ENCODE measurements at regions of chr17 and their contacts with region 1.

Region 1: GRCh38 chr17:65988081-65988850 is 203.7 kb downstream of the CEP112 start:
- DNase-seq: peak; percentile 54
- H3K4me3 ChIP-seq: no peak overlapping the region
- H3K27ac ChIP-seq: no peak overlapping the region
- H3K4me1 ChIP-seq: no peaks in the 10 kb centered on the region
- H3K27me3 ChIP-seq: no peaks in the 10 kb centered on the region
- CTCF ChIP-seq: peak; percentile 30 to 60
- POLR2A ChIP-seq: no peak

Region 2: DNA sequence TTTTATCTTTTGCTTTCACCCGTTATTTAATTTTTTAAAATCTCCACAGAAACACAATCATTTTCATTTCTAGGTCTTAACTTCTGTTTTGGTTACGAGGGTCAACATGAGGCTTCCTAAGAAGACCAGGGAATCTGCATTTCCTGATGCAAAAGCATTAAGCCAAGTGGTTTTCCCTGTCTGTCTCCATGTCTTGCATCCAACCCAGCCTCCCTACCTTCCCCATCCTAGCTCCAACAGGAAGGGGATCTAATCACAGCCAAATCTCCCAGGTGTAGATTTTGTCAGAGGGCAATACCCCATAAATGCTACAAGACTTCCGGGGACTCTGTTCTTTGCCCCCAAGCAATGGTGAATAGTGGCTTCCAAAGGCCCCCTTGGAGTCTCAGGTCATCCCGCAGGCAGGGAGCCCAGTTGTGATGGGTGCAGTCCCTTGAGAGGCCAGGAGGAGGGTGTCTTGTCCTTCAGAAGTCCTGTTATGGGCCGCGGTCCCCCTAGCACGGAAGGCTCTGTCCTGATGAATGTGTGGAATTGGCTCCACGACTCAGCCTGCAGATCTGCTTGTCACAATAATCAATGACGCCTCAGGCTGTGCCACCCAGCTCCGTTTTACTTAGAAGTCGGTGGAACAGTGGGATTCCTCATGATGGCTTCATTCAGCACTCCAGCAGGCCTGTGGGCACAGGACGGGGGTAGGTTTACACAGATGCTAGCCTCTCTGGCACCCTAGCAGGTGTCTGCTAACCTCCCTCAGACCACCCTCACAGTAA is 710.0 kb before region 1 on chr17:
- CTCF ChIA-PET with region 1: interaction called, 7 read pairs
- POLR2A ChIA-PET with region 1: no interaction called
- dilution Hi-C with region 1: no loop called
- intact Hi-C with region 1: loop called (anchors 1 kb)
- DNase-seq: peak; percentile 58
- H3K4me3 ChIP-seq: no peak overlapping the region
- H3K27ac ChIP-seq: no peak overlapping the region
- H3K4me1 ChIP-seq: peaks cover 1% of the 10 kb centered on the region
- H3K27me3 ChIP-seq: no peaks in the 10 kb centered on the region
- CTCF ChIP-seq: peak; percentile 79 to 80
- POLR2A ChIP-seq: no peak

Region 3: DNA sequence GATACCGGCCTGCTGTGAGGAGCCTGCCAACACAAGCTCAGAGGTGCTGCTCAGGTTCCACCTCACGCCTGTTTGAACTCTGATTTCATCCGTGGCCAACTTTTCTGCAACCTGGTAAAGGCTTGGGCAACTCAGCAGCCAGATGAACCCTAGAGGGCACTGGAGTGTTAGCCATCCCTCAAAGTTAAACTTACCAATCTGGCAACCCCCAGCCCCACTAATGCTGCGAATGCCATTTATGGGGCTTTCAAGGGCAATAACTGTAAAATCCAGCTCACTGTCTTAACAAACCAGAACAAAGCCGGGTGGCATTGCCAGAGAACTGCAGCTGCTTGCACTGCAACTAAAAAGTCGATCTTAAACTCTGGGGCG is 532.3 kb before region 1 on chr17:
- CTCF ChIA-PET with region 1: no interaction called
- POLR2A ChIA-PET with region 1: no interaction called
- dilution Hi-C with region 1: no loop called
- intact Hi-C with region 1: loop called (anchors 10 kb)
- DNase-seq: peak; percentile 20
- H3K4me3 ChIP-seq: no peak overlapping the region
- H3K27ac ChIP-seq: no peak overlapping the region
- H3K4me1 ChIP-seq: no peaks in the 10 kb centered on the region
- H3K27me3 ChIP-seq: peaks cover 10 to 16% of the 10 kb centered on the region in 2 experiments
- CTCF ChIP-seq: peak in 1 of 2 donors; percentile 29
- POLR2A ChIP-seq: no peak

Region 4: GRCh38 chr17:65556014-65556909 is 432.0 kb before region 1 on chr17:
- CTCF ChIA-PET with region 1: no interaction called
- POLR2A ChIA-PET with region 1: no interaction called
- dilution Hi-C with region 1: no loop called
- intact Hi-C with region 1: loop called (anchors 2 kb)
- DNase-seq: peak; percentile 21
- H3K4me3 ChIP-seq: no peak overlapping the region
- H3K27ac ChIP-seq: no peak overlapping the region
- H3K4me1 ChIP-seq: peaks cover 5% of the 10 kb centered on the region
- H3K27me3 ChIP-seq: peaks cover 4 to 5% of the 10 kb centered on the region in 2 experiments
- CTCF ChIP-seq: peak; percentile 76 to 79
- POLR2A ChIP-seq: no peak

Region 5: DNA sequence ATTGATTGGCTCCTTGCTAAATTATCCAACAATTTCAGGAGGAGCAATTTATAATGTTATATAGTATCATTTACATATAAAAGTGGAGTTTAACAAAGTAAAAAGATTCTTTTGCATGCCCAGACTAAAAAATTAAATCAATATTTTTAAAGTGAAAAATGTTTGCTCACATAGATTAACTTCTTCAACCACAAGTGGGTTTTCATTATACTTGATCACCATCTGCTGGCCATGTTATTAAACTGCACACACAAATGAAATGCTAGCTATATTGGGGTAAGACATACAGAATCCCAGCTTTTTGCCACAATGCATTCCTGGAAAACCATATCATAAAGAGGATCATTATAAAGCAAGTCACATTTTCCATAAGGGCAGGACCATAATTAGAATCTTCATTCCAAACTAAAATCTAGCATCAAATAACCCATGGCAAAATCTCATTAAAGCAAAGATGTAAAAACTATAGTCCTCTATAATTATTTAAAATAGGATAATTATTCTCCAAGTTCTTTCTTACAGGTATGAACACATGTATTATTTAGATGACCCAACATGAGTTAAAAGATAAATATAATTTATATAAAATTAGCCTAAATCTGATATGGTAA is 177.4 kb after region 1 on chr17:
- CTCF ChIA-PET with region 1: no interaction called
- POLR2A ChIA-PET with region 1: no interaction called
- dilution Hi-C with region 1: no loop called
- intact Hi-C with region 1: loop called (anchors 2 kb)
- DNase-seq: peak; percentile 72
- H3K4me3 ChIP-seq: no peak overlapping the region
- H3K27ac ChIP-seq: no peak overlapping the region
- H3K4me1 ChIP-seq: no peaks in the 10 kb centered on the region
- H3K27me3 ChIP-seq: no peaks in the 10 kb centered on the region
- CTCF ChIP-seq: peak; percentile 33 to 45
- POLR2A ChIP-seq: no peak